ENCODE measurements at regions of chr5 and their contacts with region 1.

Region 1: GRCh38 chr5:141524604-141525597 is 36.0 kb downstream of the PCDHGC5 start:
- DNase-seq: no peak
- H3K4me3 ChIP-seq: peak overlapping the region in 1 of 4 donors; percentile 12
- H3K27ac ChIP-seq: peak overlapping the region; percentile 53 to 82 (median 74)
- H3K4me1 ChIP-seq: peaks cover 30 to 81% (median 53%) of the 10 kb centered on the region in 3 donors
- H3K27me3 ChIP-seq: no peaks in the 10 kb centered on the region
- CTCF ChIP-seq: peak; percentile 98 to 99 (median 99)
- POLR2A ChIP-seq: no peak

Region 2: GRCh38 chr5:141208478-141208877 is 316.4 kb before region 1 on chr5 and contains the start of gene PCDHB12:
- intact Hi-C with region 1: no loop called
- DNase-seq: no peak
- H3K4me3 ChIP-seq: peak within 1 kb of the TSS in 1 of 4 donors; percentile 5
- H3K27ac ChIP-seq: no peak within 1 kb of the TSS
- H3K4me1 ChIP-seq: no peaks in the 10 kb centered on the region
- H3K27me3 ChIP-seq: peaks cover 0 to 24% (median 0%) of the 10 kb centered on the region in 4 donors
- CTCF ChIP-seq: no peak
- POLR2A ChIP-seq: no peak
- total RNA-seq, gene PCDHB12: 0.22 to 2.6 (median 1.6) TPM

Region 3: GRCh38 chr5:141412854-141413539 is 111.9 kb before region 1 on chr5 and contains the start of gene PCDHGA10:
- intact Hi-C with region 1: loop called (anchors 10 kb)
- DNase-seq: no peak
- H3K4me3 ChIP-seq: peak within 1 kb of the TSS; percentile 20 to 56 (median 36)
- H3K27ac ChIP-seq: peak within 1 kb of the TSS in 1 of 4 donors; percentile 30
- H3K4me1 ChIP-seq: peaks cover 0 to 4% (median 0%) of the 10 kb centered on the region in 3 donors
- H3K27me3 ChIP-seq: peaks cover 0 to 44% (median 0%) of the 10 kb centered on the region in 4 donors
- CTCF ChIP-seq: peak in 4 of 6 experiments; percentile 36 to 64 (median 57)
- POLR2A ChIP-seq: no peak
- total RNA-seq, gene PCDHGA10: 4.1 to 8.0 (median 7.3) TPM

Region 4: GRCh38 chr5:141475625-141476131 is 49.2 kb before region 1 on chr5 and contains the start of gene PCDHGC3:
- intact Hi-C with region 1: no loop called
- DNase-seq: peak; percentile 36
- H3K4me3 ChIP-seq: peak within 1 kb of the TSS; percentile 56 to 77 (median 72)
- H3K27ac ChIP-seq: peak within 1 kb of the TSS; percentile 79 to 93 (median 92)
- H3K4me1 ChIP-seq: peaks cover 15 to 52% (median 28%) of the 10 kb centered on the region in 3 donors
- H3K27me3 ChIP-seq: no peaks in the 10 kb centered on the region
- CTCF ChIP-seq: peak; percentile 12 to 44 (median 33)
- POLR2A ChIP-seq: peak in 2 of 4 donors; percentile 55 to 66
- total RNA-seq, gene PCDHGC3: 36.6 to 52.5 (median 38.6) TPM

Region 5: DNA sequence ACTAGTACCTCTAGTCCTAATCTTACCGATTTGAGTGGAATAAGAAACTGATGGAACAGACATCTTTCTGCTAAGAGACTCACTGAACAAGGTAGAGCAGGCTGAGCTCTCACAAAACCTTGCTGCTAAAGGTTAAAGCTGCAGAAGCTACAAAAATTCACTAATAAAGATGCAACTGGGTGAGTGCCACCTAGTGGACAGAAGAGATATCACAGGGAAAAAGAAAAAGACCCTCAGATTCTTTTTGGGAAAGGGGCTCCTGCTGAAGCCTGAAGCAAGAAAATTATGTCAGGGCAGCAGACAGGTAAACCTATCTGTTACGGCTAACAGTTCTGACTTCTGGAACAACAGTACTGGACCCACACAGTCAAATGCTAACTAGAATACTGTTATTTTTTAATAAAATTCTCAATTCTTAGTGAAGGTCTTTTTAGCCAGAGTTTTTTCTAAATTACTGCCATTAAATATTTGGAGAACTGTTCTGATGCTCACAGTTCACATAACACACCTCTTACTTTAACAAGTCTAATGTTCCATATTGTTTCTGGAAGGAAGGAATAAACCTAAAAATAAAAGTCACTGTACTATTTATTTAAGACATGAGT is 42.7 kb after region 1 on chr5:
- intact Hi-C with region 1: no loop called
- DNase-seq: no peak
- H3K4me3 ChIP-seq: no peak overlapping the region
- H3K27ac ChIP-seq: no peak overlapping the region
- H3K4me1 ChIP-seq: peaks cover 0 to 9% (median 0%) of the 10 kb centered on the region in 3 donors
- H3K27me3 ChIP-seq: no peaks in the 10 kb centered on the region
- CTCF ChIP-seq: peak; percentile 49 to 91 (median 76)
- POLR2A ChIP-seq: no peak

Measured in esophagus squamous epithelium (tissue), 5 donors.